PC-3 (cell line): ENCODE measurements at regions of chr12 and their contacts with region 1.

Region 1: DNA sequence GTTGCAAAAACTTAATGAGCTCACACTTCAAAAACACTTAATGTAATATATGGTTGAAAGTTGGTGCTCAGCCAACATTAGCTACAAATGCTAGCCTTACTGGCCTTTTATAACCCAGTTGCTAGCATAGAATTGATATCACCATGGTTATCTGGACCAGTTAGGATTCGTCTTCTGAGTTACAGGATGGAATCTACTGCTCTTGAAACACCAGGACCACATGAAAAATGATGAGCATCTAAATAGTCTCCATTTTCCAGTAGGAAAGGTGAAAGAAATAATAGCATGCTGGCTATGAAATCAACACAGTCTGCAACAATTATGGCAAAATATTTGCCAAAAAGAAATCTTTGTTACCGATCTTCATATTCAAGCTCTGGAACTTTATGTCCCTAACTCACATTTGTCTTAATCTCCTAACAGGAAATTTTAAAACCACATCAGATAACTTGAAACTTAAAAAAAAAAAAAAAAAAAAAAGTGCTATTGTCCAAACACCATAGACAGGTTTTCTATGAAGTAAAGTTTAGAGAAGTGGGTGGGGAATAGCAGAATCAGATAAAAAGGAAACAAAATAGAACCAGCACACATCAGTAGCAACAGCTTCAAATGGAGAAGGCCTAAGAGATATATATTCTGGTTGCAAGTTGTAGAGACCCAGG is 12.6 kb upstream of the CD69 start:
- DNase-seq: no peak
- ATAC-seq: no peak
- H3K4me3 ChIP-seq: no peak overlapping the region
- H3K27ac ChIP-seq: no peak overlapping the region
- H3K4me1 ChIP-seq: peaks cover 10% of the 10 kb centered on the region; the same call in 1 of the 2 replicates
- H3K27me3 ChIP-seq: no peaks in the 10 kb centered on the region
- CTCF ChIP-seq: no peak

Region 2: DNA sequence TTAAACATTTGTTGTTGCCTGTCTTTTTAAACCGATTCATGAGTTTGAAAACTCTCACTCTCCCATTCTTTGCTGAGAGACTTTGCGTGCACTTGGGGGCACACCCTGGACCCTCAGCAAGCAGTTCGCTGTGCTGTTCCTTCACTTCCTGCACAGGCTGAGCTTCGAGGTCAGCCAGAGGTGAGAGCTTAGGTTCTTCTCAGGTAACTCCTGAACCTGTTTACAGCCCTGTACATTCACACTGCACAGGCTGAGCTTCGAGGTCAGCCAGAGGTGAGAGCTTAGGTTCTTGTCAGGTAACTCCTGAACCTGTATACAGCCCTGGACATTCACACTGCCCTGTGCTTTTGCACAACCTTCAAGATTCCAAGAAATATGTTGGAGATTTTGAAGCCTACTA is 30.7 kb before region 1 on chr12:
- CTCF ChIA-PET with region 1: no interaction called
- POLR2A ChIA-PET with region 1: no interaction called
- intact Hi-C with region 1: no loop called
- DNase-seq: no peak
- ATAC-seq: no peak
- H3K4me3 ChIP-seq: no peak overlapping the region
- H3K27ac ChIP-seq: no peak overlapping the region
- H3K4me1 ChIP-seq: peaks cover 6% of the 10 kb centered on the region; the same call in 1 of the 2 replicates
- H3K27me3 ChIP-seq: no peaks in the 10 kb centered on the region
- CTCF ChIP-seq: no peak

Region 3: DNA sequence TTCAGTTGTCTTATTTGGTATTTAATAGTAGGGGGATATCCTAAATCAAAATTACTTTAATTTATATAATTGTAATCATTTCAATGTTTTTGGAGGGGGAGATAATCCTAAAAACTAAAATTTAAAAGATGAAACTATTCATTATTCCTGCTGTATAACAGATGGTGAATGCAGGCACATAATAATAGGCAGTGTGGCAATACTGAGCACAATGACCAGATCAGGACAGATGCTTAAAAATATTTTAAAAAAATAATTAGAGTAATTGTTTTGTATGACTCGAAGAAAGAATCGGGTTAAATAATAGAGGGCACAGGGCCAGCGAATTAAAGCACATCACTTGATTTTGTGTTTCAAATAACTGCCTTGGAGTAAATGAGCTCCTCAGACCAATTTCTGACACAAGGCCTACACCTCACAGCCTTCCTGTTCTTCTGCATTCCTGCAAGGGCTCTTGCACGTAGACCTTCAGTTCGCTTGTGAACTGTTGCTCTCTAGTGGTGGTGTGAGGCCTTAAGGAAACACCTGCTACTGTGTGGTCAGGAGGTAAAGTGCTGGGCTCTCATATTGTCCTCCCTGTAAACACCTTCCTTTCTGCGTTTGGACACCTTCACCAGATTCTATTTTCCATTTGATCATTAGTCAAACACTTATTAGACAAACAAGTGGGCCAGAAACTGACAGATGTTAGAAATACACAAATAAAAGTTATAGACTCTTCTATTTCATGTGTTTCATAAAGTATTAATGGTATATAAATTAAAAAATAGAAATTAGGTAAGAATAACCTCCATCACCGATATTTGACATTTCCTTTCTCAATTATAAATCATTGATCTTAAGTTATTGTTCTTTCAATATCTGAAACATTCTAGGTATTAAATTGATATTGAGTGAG is 24.6 kb after region 1 on chr12:
- CTCF ChIA-PET with region 1: no interaction called
- POLR2A ChIA-PET with region 1: no interaction called
- intact Hi-C with region 1: loop called (anchors 2 kb)
- DNase-seq: peak; percentile 78
- ATAC-seq: peak; percentile 94
- H3K4me3 ChIP-seq: no peak overlapping the region
- H3K27ac ChIP-seq: no peak overlapping the region
- H3K4me1 ChIP-seq: peaks cover 31% of the 10 kb centered on the region
- H3K27me3 ChIP-seq: no peaks in the 10 kb centered on the region
- CTCF ChIP-seq: peak; percentile 70